PC-3 (cell line): ENCODE measurements at regions of chr21 and their contacts with region 1.

Region 1: DNA sequence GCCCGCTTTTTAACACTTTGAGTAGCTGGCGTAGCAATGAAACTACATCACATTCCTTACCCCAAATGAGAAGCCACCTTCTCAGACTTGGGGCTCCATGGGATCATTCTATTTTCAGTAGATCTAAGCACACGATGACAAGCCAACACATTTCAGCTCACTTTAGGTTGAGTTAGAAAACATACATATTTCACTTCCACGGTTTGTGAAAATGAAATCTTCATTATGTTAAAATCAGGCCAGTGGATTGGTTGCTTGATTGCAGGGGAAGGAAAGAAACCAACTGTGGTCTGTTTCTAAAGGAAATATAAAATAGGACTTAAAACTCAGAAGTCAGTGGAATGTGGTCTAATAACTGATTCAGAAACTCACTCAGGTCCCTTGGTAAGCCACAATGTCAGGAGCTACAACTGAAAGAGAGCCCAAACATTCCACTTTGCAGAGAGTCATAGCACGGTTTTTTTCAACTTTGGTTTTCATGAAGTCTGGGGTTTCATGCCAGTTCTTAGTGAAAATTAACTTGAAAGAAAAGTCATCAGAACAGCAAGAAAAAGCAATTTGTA is 82.3 kb upstream of the TIAM1 start:
- DNase-seq: no peak
- ATAC-seq: no peak
- H3K4me3 ChIP-seq: no peak overlapping the region
- H3K27ac ChIP-seq: no peak overlapping the region
- H3K4me1 ChIP-seq: no peaks in the 10 kb centered on the region
- H3K27me3 ChIP-seq: no peaks in the 10 kb centered on the region
- CTCF ChIP-seq: no peak

Region 2: GRCh38 chr21:30605968-30606367 is 820.3 kb before region 1 on chr21:
- CTCF ChIA-PET with region 1: no interaction called
- POLR2A ChIA-PET with region 1: no interaction called
- intact Hi-C with region 1: no loop called
- DNase-seq: peak; percentile 53
- ATAC-seq: peak; percentile 31; the same call in 1 of the 2 replicates
- H3K4me3 ChIP-seq: no peak overlapping the region
- H3K27ac ChIP-seq: no peak overlapping the region
- H3K4me1 ChIP-seq: no peaks in the 10 kb centered on the region
- H3K27me3 ChIP-seq: no peaks in the 10 kb centered on the region
- CTCF ChIP-seq: peak; percentile 42; the same call in 1 of the 2 replicates

Region 3: DNA sequence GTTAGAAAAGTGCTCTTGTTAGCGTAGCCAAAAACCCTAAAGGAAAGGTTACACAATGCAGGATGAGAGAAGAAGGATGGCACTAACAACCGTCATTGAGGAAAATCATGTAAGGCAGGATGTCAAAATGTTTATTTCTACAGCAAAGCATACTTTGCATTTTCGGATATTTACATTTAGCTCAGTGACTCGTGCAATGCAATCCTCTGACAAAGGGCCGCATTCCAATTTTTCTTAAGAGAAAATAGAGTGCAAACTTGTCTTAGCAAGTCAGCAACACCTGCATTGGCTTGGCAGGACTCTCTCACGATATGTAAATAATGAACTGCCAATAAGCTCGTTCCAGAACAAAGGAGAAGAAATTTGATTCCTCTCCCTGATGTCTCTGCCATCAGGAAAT is 115.6 kb before region 1 on chr21:
- CTCF ChIA-PET with region 1: no interaction called
- POLR2A ChIA-PET with region 1: no interaction called
- intact Hi-C with region 1: no loop called
- DNase-seq: peak; percentile 47
- ATAC-seq: peak; percentile 72
- H3K4me3 ChIP-seq: no peak overlapping the region
- H3K27ac ChIP-seq: no peak overlapping the region
- H3K4me1 ChIP-seq: peaks cover 12% of the 10 kb centered on the region
- H3K27me3 ChIP-seq: no peaks in the 10 kb centered on the region
- CTCF ChIP-seq: no peak

Region 4: DNA sequence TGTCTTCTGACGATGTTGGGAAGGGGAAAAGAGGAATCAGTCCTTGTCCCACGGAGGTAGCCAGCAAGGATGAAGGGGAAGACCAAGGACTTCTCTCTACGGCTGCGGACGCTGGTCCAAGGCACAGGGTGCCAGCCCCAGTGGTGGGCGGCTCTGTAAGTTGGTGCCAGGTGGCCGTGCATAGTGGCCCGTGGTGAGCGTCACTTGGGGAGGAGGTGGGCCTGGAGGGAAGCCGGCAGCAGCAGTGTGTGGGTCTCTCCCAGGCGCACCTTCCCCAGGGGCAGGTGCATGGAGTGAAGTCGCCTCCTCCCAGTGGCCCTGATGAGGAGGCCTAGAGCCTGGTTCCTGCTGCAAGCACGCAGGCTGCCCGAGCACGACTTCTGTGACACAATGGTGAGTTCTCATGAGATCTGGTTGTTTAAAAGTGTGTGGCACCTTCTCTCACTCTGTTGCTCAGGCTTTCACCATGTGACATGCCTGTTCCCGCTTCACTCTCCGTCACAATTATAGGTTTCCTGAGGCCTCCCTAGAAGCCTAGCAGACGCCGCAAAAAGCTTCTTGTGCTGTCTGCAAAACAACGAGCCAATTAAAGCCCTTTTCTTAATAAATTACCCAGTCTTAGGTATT is 38.6 kb before region 1 on chr21:
- CTCF ChIA-PET with region 1: no interaction called
- POLR2A ChIA-PET with region 1: interaction called, 14 read pairs
- intact Hi-C with region 1: no loop called
- DNase-seq: no peak
- ATAC-seq: no peak
- H3K4me3 ChIP-seq: no peak overlapping the region
- H3K27ac ChIP-seq: no peak overlapping the region
- H3K4me1 ChIP-seq: no peaks in the 10 kb centered on the region
- H3K27me3 ChIP-seq: no peaks in the 10 kb centered on the region
- CTCF ChIP-seq: no peak

Region 5: DNA sequence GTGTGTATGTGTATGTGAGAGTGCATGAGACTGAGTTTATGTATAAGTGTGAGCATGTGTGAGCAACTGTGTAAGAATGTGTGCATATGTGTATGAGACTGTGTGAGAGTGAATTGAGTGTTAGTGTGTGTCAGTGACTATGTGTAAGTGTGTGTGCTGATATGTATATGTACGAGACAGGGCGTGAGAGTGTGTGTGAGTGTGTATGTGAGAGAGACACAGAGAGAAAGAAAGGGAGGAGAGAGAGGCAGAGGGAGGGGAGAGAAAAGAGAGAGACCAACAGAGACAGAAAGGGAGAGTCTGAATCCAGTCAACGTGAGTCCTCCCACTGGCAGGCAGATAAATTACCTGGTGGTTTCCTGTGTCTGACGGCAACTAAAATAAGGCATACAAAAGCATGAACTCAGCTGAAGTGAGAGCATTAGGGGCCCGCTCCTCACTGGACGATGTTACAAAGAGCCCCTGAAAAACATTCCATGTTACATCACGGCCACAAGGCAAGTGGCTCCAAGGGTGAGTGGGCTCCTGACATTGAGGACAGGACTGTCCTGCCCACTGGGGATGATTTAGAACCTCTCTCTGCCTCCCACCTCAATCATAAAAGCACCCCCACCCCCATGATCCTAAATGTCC is 15.7 kb before region 1 on chr21:
- CTCF ChIA-PET with region 1: no interaction called
- POLR2A ChIA-PET with region 1: no interaction called
- intact Hi-C with region 1: no loop called
- DNase-seq: no peak
- ATAC-seq: no peak
- H3K4me3 ChIP-seq: no peak overlapping the region
- H3K27ac ChIP-seq: no peak overlapping the region
- H3K4me1 ChIP-seq: no peaks in the 10 kb centered on the region
- H3K27me3 ChIP-seq: no peaks in the 10 kb centered on the region
- CTCF ChIP-seq: no peak